Tibial artery (tissue), 4 donors: ENCODE measurements at regions of chr9 and their contacts with region 1.

Region 1: GRCh38 chr9:34591248-34591916 is 1.9 kb upstream of the CNTFR start:
- DNase-seq: peak; percentile 81 to 91
- H3K4me3 ChIP-seq: peak overlapping the region; percentile 49 to 54
- H3K27ac ChIP-seq: peak overlapping the region; percentile 16 to 33
- H3K4me1 ChIP-seq: peaks cover 0 to 63% (median 48%) of the 10 kb centered on the region in 4 donors
- H3K27me3 ChIP-seq: peaks cover 0 to 57% of the 10 kb centered on the region in 2 donors
- CTCF ChIP-seq: peak; percentile 89 to 92

Region 2: GRCh38 chr9:33393581-33393980 is 1197.8 kb before region 1 on chr9:
- intact Hi-C with region 1: no loop called
- DNase-seq: no peak
- H3K4me3 ChIP-seq: no peak overlapping the region
- H3K27ac ChIP-seq: no peak overlapping the region
- H3K4me1 ChIP-seq: peaks cover 0 to 26% (median 14%) of the 10 kb centered on the region in 4 donors
- H3K27me3 ChIP-seq: no peaks in the 10 kb centered on the region
- CTCF ChIP-seq: no peak

Region 3: DNA sequence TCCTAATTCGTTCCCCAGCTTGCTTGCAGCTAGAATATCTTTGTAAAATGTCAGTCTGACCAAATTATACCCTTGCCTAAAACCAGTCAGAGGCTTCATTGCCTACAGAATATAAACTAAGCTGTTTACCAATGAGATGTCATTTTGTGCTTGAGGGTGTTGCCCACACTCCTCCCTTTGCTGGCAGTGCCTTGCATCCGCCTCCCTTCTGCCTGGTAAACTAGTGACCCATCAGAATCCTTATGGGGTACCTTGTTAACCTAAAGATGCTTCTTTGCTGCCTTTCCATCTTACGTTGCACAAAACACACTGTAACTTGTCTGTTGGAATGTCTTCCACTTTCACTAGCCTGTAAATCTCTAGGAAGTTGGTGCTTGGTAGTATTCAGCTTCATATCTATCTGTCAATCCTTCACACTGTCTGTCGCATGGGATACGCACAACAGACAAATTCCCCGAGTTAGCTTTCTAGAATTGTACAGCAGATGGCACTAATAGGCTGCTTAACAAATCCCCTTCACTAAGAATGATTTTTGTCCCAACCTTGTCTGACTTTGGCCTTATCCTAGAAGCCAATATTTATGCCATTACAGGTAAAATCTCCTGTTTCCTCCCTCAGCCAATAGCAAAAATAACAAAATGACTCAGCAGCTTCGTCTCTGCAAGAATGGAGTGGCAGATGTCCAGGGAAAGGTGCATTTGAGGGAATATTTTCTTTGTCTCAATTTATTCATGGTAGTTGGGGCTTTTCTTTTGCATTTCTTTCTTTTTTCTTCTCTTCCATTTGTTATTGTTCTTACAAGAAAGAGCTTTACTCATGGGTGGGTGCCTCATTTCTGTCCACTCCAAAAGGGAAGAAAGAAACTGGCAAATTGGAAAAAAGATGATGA is 259.1 kb before region 1 on chr9:
- intact Hi-C with region 1: loop called (anchors 5 kb)
- DNase-seq: no peak
- H3K4me3 ChIP-seq: no peak overlapping the region
- H3K27ac ChIP-seq: no peak overlapping the region
- H3K4me1 ChIP-seq: peaks cover 0 to 19% (median 9%) of the 10 kb centered on the region in 4 donors
- H3K27me3 ChIP-seq: no peaks in the 10 kb centered on the region
- CTCF ChIP-seq: peak; percentile 54

Region 4: GRCh38 chr9:34403554-34404380 is 187.6 kb before region 1 on chr9:
- intact Hi-C with region 1: loop called (anchors 5 kb)
- DNase-seq: peak; percentile 72 to 75
- H3K4me3 ChIP-seq: no peak overlapping the region
- H3K27ac ChIP-seq: no peak overlapping the region
- H3K4me1 ChIP-seq: no peaks in the 10 kb centered on the region
- H3K27me3 ChIP-seq: no peaks in the 10 kb centered on the region
- CTCF ChIP-seq: peak; percentile 89 to 91

Region 5: DNA sequence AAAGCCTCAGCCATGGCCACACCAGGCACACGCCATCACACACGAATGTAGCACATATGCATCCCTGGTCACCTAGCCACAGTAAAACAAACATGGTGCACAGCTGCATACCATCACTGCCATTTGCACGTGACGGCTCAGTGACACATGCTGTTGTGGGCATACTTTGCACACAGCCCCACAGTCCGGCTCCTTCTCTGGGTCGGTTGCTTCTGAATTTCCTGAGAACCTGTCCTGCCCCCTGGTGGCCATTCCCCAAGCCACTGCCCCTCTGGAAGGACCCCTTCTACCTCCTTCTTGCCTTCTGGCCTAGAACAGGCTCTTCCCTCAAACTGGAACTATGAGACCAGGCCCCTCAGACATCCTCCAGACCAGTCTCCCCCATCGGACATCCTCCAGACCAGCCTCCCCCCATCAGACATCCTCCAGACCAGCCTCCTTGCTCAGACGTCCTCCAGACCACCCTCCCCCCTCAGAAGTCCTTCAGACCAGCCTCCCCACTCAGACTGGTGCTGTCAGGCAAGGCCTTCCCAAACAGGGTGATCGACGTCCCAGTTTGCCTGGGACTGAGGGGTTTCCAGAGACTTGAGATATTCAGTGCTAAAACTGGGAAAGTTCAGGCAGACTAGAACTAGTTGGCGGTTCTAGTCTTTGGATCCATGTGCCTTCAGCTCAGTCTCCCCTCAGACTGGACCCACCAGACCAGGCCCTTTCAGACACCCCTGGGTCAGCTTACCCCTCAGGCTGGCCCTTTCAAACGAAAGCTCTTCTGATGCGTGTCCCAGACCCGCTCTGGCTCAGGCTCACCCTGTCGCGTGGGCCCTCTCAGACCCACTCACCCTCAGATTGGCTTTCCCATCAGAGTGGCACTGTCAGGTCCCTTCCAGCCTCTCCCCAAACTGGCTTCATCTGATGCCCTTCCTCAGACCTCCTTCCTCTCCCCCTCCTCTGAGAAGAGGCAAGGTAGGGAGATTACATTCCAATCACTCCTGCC is 44.3 kb before region 1 on chr9:
- intact Hi-C with region 1: loop called (anchors 5 kb)
- DNase-seq: peak in 1 of 2 donors; percentile 65
- H3K4me3 ChIP-seq: no peak overlapping the region
- H3K27ac ChIP-seq: no peak overlapping the region
- H3K4me1 ChIP-seq: no peaks in the 10 kb centered on the region
- H3K27me3 ChIP-seq: peaks cover 0 to 28% of the 10 kb centered on the region in 2 donors
- CTCF ChIP-seq: peak; percentile 45 to 51

Region 6: GRCh38 chr9:34651876-34652601 is 60.7 kb after region 1 on chr9 and contains the start of gene IL11RA:
- intact Hi-C with region 1: no loop called
- DNase-seq: peak; percentile 92 to 97
- H3K4me3 ChIP-seq: peak within 1 kb of the TSS; percentile 45 to 60
- H3K27ac ChIP-seq: peak within 1 kb of the TSS; percentile 86 to 93
- H3K4me1 ChIP-seq: peaks cover 8 to 70% (median 61%) of the 10 kb centered on the region in 4 donors
- H3K27me3 ChIP-seq: no peaks in the 10 kb centered on the region
- CTCF ChIP-seq: no peak